CD4-positive, alpha-beta memory T cell (primary cell): ENCODE measurements at regions of chr12 and their contacts with region 1.

Region 1: GRCh38 chr12:121579981-121580868 is 598 bp downstream of the KDM2B start:
- DNase-seq: peak; percentile 74 to 86 (median 77)
- H3K4me3 ChIP-seq: peak overlapping the region; percentile 63 to 87
- H3K4me3 Mint-ChIP-seq: peak overlapping the region; percentile 95 to 99 (median 98)
- H3K27ac ChIP-seq: peak overlapping the region; percentile 71
- H3K27ac Mint-ChIP-seq: peak overlapping the region; percentile 92 to 99 (median 98)
- H3K4me1 ChIP-seq: peaks cover 53% of the 10 kb centered on the region
- H3K4me1 Mint-ChIP-seq: peaks cover 21 to 65% (median 44%) of the 10 kb centered on the region in 4 donors
- H3K27me3 ChIP-seq: no peaks in the 10 kb centered on the region
- H3K27me3 Mint-ChIP-seq: no peaks in the 10 kb centered on the region

Region 2: DNA sequence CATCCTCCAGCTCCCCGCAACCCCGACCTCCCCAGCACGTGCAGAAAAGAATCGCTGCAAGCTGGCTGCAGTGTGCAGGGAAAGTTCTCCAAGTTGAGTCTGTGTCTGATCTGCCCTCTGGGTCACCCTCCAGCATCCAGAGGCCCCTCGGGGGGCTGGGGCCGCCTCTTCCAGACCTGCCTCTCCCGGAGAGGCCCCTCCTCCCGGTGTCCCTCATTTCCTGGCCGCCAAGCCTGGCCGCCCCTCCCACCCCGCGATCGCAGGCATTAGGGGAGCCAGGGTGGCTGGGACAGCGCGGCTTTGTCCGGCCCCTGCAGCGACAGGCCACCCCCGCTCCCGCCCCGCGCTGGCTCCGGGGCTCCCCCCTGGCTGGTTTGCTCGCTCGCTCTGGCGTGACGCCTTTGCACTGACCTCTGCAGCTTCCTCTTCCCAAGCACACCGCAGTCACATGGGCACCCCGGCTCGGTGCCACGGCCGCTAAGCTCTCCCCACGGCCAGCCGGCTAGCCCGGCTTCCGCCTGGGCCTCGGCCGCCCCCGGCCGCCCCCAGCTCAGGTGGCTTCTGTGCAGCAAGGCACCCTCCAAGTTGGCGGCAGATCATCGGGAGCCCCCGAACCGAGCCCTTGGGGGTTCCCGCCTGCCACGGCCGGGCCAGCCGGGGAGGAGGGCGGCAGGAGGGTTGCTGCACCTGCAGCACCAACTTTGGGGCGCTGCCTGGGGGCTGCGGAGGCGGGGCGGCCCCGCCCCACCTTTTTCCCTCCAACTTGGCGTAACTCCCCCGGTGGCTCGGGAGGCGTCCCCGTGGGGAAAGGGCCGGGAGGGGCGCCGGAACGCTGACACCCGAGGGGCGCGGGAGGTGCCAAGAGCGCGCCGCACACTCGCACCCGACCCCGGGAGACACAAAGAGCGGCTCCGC is 43.1 kb before region 1 on chr12:
- CTCF ChIA-PET with region 1: interaction called, 4 read pairs
- POLR2A ChIA-PET with region 1: interaction called, 18 read pairs
- intact Hi-C with region 1: loop called (anchors 5 kb)
- DNase-seq: peak; percentile 46 to 75 (median 48)
- H3K4me3 ChIP-seq: peak overlapping the region; percentile 29 to 55
- H3K4me3 Mint-ChIP-seq: peak overlapping the region; percentile 62 to 86 (median 82)
- H3K27ac ChIP-seq: peak overlapping the region; percentile 80
- H3K27ac Mint-ChIP-seq: peak overlapping the region; percentile 95 to 99 (median 95)
- H3K4me1 ChIP-seq: peaks cover 57% of the 10 kb centered on the region
- H3K4me1 Mint-ChIP-seq: peaks cover 29 to 69% (median 48%) of the 10 kb centered on the region in 4 donors
- H3K27me3 ChIP-seq: no peaks in the 10 kb centered on the region
- H3K27me3 Mint-ChIP-seq: no peaks in the 10 kb centered on the region

Region 3: DNA sequence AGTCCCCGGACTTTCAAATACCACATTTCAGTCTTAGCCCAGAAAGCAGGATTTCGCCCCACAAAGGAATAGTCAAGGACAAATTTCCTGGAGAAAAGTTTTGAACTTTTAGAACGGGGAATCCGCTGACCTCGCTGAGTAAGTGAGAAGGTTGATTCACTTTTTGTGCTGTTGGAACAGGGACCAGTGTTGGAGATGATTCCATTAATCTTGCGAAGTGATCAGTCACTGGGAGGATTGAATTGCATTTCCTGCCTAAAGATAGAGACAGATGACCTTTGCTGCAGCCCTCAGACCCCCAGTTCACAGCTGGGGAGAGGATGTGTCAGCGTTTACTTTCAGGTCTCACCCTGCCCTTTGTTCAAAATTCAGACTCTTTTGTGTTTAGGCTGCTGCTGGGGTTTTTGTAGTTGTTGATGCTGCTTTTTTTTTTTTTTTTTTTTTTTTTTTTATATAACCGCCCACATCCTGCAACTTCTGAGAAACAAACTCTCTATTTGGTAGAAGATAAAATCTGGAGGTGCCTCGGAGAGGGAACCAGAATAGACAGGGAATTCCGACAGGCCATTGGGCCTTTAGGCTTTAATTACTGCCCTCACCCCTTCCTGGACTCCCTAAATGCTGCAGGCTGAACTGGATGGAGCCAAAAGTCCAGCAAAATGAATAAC is 10.4 kb after region 1 on chr12:
- CTCF ChIA-PET with region 1: interaction called, 23 read pairs
- POLR2A ChIA-PET with region 1: interaction called, 254 read pairs
- intact Hi-C with region 1: loop called (anchors 1 kb)
- DNase-seq: peak; percentile 84 to 86 (median 85)
- H3K4me3 ChIP-seq: peak overlapping the region; percentile 42 to 62
- H3K4me3 Mint-ChIP-seq: peak overlapping the region; percentile 87 to 94 (median 92)
- H3K27ac ChIP-seq: peak overlapping the region; percentile 97
- H3K27ac Mint-ChIP-seq: peak overlapping the region; percentile 94 to 100 (median 99)
- H3K4me1 ChIP-seq: peaks cover 52% of the 10 kb centered on the region
- H3K4me1 Mint-ChIP-seq: peaks cover 23 to 49% (median 35%) of the 10 kb centered on the region in 4 donors
- H3K27me3 ChIP-seq: no peaks in the 10 kb centered on the region
- H3K27me3 Mint-ChIP-seq: no peaks in the 10 kb centered on the region

Region 4: DNA sequence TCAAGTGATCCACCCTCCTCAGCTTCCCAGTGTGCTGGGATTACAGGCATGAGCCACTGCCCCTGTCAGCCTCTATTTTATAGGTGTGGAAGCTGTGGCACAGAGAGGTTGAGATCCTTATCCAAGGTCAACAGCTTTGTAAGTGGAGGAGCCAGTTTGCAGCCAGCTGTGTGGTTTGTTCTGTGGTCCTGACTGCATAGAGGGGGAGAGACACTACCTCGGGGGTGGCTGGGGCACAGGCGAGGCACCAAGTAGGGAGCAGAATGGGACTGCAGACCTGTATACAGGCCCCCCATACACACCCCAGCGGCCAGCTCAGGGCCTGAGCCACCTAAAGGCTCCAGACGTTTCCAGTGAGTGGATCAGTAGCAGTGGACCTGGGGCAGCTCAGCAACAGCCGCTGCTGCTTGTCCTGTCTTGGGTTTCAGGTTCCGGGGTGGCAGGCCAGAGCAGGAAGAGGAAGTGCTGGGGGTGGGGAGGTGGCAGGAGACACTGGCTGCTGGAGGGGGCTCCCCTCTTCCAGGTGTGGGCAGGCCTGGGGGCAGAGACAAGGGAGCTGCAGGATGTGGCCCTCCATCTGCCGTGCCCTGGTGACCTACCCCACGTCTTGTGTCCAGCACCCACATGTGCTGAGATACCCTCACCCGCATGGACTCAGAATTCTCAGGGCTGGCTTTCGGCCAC is 57.1 kb after region 1 on chr12:
- CTCF ChIA-PET with region 1: interaction called, 3 read pairs
- POLR2A ChIA-PET with region 1: interaction called, 216 read pairs
- intact Hi-C with region 1: no loop called
- DNase-seq: peak; percentile 36 to 64 (median 49)
- H3K4me3 ChIP-seq: peak overlapping the region in 1 of 2 donors; percentile 23
- H3K4me3 Mint-ChIP-seq: peak overlapping the region; percentile 13 to 84 (median 68)
- H3K27ac ChIP-seq: peak overlapping the region; percentile 59
- H3K27ac Mint-ChIP-seq: peak overlapping the region; percentile 89 to 93 (median 90)
- H3K4me1 ChIP-seq: peaks cover 58% of the 10 kb centered on the region
- H3K4me1 Mint-ChIP-seq: peaks cover 31 to 59% (median 44%) of the 10 kb centered on the region in 4 donors
- H3K27me3 ChIP-seq: no peaks in the 10 kb centered on the region
- H3K27me3 Mint-ChIP-seq: no peaks in the 10 kb centered on the region

Region 5: DNA sequence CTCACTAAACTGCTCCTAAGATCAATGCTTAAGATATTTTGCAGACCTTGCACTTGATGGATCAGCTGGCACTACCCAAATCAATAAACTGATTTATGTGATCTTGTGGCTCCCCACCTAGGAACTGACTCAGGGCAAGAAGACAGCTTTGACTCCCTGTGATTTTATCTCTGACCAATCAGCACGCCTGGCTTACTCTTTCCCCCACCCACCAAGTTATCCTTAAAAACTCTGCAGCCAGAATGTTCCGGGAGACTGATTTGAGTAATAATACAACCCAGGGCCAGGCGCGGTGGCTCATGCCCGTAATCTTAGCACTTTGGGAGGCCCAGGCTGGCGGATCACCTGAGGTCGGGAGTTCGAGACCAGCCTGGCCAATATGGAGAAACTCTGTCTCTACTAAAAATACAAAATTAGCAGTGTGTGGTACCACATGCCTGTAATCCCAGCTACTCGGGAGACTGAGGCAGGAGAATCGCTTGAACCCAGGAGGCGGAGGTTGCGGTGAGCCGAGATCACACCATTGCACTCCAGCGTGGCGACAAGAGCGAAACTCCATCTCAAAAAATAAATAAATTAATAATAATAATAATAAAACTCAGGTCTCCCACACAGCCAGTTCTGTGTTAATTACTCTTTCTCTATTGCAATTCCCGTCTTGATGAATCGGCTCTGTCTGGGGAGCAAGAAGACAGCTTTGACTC is 77.2 kb after region 1 on chr12:
- CTCF ChIA-PET with region 1: interaction called, 3 read pairs
- POLR2A ChIA-PET with region 1: interaction called, 17 read pairs
- intact Hi-C with region 1: no loop called
- DNase-seq: no peak
- H3K4me3 ChIP-seq: no peak overlapping the region
- H3K4me3 Mint-ChIP-seq: peak overlapping the region; percentile 8 to 94 (median 62)
- H3K27ac ChIP-seq: no peak overlapping the region
- H3K27ac Mint-ChIP-seq: peak overlapping the region; percentile 78 to 100 (median 99)
- H3K4me1 ChIP-seq: peaks cover 56% of the 10 kb centered on the region
- H3K4me1 Mint-ChIP-seq: peaks cover 41 to 77% (median 55%) of the 10 kb centered on the region in 4 donors
- H3K27me3 ChIP-seq: no peaks in the 10 kb centered on the region
- H3K27me3 Mint-ChIP-seq: no peaks in the 10 kb centered on the region

Region 6: DNA sequence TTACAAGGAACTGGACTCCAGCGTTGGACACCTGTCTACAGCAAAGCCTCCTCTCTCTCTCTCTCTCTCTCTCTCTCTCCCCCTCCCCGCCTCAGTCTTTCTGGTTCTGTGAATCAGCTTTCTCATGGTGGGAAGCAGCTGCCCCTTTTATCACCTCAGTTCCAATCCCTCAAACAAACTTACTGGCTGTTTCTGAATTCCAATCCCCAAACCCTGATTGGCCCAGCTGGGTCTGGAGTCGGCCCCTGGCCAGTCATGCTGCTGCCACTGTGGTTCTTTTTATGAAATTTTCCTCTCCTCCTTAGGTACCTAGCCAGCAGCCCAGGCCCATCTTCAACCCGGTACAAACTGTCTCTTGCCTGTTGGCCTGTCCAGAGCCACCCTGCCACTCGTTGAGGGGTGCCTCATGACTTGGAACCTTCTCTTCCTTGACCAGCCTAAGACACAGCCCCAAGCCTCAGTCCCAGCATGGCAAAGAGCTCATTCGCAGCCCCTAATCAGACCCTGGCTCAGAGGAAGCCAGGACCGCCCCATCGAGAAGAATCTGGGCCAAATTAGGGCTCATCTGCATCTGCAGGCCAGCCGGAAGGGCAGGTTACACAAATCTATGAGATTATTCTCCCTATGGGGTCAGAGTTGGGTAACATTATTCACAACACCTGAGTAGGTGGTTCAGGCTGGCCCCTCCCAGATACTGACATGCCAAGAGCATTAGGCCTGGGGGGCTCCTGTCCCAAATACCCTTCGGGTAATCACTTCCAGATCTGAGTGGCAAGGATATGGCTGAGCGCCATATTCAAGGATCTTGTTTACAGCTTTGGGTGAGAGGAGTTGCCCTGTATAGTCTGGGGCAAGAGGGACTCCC is 98.7 kb after region 1 on chr12:
- CTCF ChIA-PET with region 1: interaction called, 18 read pairs
- POLR2A ChIA-PET with region 1: interaction called, 9 read pairs
- intact Hi-C with region 1: no loop called
- DNase-seq: no peak
- H3K4me3 ChIP-seq: no peak overlapping the region
- H3K4me3 Mint-ChIP-seq: no peak overlapping the region
- H3K27ac ChIP-seq: no peak overlapping the region
- H3K27ac Mint-ChIP-seq: peak overlapping the region in 4 of 7 donors; percentile 18 to 70 (median 50)
- H3K4me1 ChIP-seq: peaks cover 3% of the 10 kb centered on the region
- H3K4me1 Mint-ChIP-seq: peaks cover 4 to 10% (median 5%) of the 10 kb centered on the region in 4 donors
- H3K27me3 ChIP-seq: no peaks in the 10 kb centered on the region
- H3K27me3 Mint-ChIP-seq: no peaks in the 10 kb centered on the region

Region 7: DNA sequence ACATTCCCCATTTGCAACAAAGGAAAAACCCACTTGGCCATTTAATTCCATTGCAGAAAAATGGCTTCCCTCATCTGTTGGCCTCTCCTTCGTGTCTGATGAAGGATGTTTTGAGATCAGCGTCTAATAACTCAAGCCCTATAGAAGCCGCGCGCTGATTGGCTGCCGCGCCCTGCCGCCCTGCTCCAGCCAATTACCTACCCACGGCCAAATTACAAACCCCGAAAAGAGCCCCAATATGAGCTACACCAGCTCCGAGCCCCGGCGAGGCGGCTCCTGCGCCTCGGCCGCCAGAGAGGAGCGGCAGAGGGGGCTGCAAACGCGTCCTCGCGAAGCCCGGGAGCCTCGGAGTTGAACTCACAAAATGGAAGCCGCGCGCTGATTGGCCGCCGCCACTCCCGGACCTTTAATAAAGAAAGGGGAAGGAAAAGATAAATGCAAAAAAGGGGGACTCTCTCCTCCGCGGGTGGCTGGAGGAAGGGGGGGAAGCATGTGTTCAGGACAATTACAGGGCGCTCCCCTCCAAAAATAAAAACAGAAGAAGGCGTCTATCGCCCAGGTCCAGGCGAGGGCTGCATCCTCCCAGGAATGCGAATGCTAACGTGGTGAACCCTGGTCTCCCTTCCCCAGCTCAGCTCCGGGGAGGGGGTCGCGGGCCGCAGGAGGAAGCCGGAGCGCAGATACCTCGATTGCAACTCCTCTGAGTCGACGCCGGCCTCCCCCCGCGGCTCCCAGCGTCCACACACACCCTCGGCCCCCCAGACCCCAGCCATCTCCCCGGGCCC is 222.8 kb after region 1 on chr12:
- CTCF ChIA-PET with region 1: no interaction called
- POLR2A ChIA-PET with region 1: interaction called, 37 read pairs
- intact Hi-C with region 1: no loop called
- DNase-seq: peak; percentile 90 to 93 (median 91)
- H3K4me3 ChIP-seq: peak overlapping the region; percentile 98
- H3K4me3 Mint-ChIP-seq: peak overlapping the region; percentile 92 to 99 (median 98)
- H3K27ac ChIP-seq: peak overlapping the region; percentile 91
- H3K27ac Mint-ChIP-seq: peak overlapping the region; percentile 98 to 99 (median 99)
- H3K4me1 ChIP-seq: peaks cover 37% of the 10 kb centered on the region
- H3K4me1 Mint-ChIP-seq: peaks cover 21 to 60% (median 35%) of the 10 kb centered on the region in 4 donors
- H3K27me3 ChIP-seq: no peaks in the 10 kb centered on the region
- H3K27me3 Mint-ChIP-seq: no peaks in the 10 kb centered on the region